Breast epithelium (tissue), 4 donors: ENCODE measurements at regions of chr3 and their contacts with region 1.

Region 1: GRCh38 chr3:116083686-116084085 is 361.6 kb downstream of the LSAMP start:
- DNase-seq: no peak
- H3K4me3 ChIP-seq: no peak overlapping the region
- H3K27ac ChIP-seq: no peak overlapping the region
- H3K4me1 ChIP-seq: no peaks in the 10 kb centered on the region
- H3K27me3 ChIP-seq: no peaks in the 10 kb centered on the region
- CTCF ChIP-seq: no peak
- POLR2A ChIP-seq: no peak

Region 2: DNA sequence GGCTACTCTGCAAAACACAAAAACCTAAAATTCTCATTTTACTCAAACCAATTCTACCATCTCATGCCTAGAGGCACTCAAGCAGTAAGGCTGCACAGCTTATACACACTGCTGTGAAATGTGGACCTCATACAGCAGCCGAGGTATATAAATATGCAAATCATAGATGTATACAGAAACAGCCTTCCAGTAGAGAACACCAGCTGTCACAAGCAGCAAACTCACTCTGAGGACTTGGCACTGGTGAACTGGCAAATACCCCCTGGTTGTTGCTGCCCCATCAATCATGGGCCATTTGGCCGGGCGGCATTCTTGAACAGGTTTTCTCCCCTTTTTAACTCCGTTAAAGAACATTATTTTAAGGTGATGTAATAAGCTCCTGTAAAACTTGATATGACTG is 16.4 kb before region 1 on chr3:
- intact Hi-C with region 1: loop called (anchors 1 kb)
- DNase-seq: no peak
- H3K4me3 ChIP-seq: no peak overlapping the region
- H3K27ac ChIP-seq: no peak overlapping the region
- H3K4me1 ChIP-seq: no peaks in the 10 kb centered on the region
- H3K27me3 ChIP-seq: no peaks in the 10 kb centered on the region
- CTCF ChIP-seq: no peak
- POLR2A ChIP-seq: no peak